ENCODE measurements at regions of chr14 and their contacts with region 1.

Region 1: DNA sequence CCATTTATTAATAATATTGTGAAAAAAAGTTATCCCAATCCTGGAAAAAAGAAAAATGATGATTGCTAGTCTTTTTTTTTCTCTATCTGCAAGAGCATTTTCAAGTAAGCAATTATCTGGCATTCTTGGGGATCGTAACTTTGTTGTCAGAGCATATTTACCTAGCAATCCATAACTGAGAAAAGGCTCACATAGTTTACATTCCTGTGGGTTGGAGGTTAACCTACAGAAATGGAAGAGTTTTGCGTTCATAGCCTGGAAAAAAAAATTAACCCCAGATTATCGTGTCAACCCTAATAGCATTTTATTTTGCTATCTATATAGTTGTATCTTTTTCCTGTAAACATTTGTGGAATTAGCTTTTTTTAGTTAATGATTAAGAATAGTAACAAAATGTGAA is 292.3 kb downstream of the DAD1 start:
- DNase-seq: peak; percentile 76
- ATAC-seq: peak; percentile 93
- H3K4me3 ChIP-seq: no peak overlapping the region
- H3K27ac ChIP-seq: no peak overlapping the region
- H3K4me1 ChIP-seq: peaks cover 13% of the 10 kb centered on the region
- H3K27me3 ChIP-seq: peaks cover 0 to 21% of the 10 kb centered on the region in 2 experiments; a peak in 2 of 5 replicates
- CTCF ChIP-seq: no peak
- EP300 ChIP-seq: peak in 1 of 2 experiments; percentile 69; a peak in 2 of 4 replicates
- POLR2A ChIP-seq: no peak
- RAD21 ChIP-seq: no peak

Region 2: DNA sequence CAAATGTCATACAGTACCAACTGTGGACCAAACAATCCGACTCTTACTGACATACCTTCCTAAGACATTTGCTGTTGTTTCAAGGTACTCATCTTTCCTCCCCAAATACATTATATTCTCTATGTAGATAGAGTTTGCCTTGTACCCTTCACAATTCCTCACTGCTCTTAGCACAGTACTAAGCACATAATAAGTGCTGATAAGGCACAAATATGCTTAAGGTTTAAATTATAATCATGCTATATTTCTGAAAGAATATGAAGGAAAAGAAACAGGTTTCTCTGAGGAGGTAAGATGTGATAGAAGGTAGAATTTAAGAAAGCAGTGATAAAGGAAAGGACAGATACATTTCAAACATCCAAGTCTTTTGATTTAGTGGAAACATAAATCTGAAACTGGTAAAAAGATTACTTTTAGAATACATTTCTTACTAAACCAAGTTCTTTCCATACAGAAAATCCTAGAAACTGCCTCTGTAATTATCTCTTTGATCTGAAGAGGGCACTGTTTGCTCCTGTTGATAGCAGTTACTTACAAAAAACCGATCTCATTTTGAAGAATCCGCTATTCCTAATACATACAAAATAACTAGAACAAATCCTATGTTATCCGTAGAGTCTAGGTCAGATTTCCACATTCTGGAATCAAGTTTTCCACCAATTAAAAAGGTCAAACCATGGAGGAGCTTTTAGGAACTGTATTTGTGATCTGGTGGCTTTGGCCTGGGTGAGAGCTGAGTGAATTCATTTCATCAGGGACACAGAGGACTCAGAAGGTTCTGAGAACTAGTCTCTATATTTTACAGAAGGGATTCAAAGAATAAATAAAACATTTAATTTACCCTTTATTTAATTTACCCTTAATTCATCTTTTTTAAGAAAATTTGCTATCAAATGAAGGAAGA is 19.6 kb before region 1 on chr14:
- CTCF ChIA-PET with region 1: no interaction called
- POLR2A ChIA-PET with region 1: no interaction called
- in situ Hi-C with region 1: no loop called
- intact Hi-C with region 1: loop called (anchors 1 kb)
- DNase-seq: peak; percentile 46
- ATAC-seq: peak; percentile 61; the same call in 1 of the 3 replicates
- H3K4me3 ChIP-seq: no peak overlapping the region
- H3K27ac ChIP-seq: no peak overlapping the region
- H3K4me1 ChIP-seq: no peaks in the 10 kb centered on the region
- H3K27me3 ChIP-seq: peaks cover 3 to 4% of the 10 kb centered on the region in 2 experiments; a peak in 2 of 5 replicates
- CTCF ChIP-seq: peak; percentile 59
- EP300 ChIP-seq: no peak
- POLR2A ChIP-seq: no peak
- RAD21 ChIP-seq: no peak